ENCODE measurements at regions of chr7 and their contacts with region 1.

Region 1: GRCh38 chr7:25389489-25390106 is 161.3 kb upstream of the NPVF start:
- DNase-seq: peak; percentile 32
- H3K4me3 ChIP-seq: no peak overlapping the region
- H3K27ac ChIP-seq: no peak overlapping the region
- H3K4me1 ChIP-seq: no peaks in the 10 kb centered on the region
- H3K27me3 ChIP-seq: no peaks in the 10 kb centered on the region
- CTCF ChIP-seq: peak; percentile 33 to 52

Region 2: GRCh38 chr7:25250386-25250785 is 139.2 kb before region 1 on chr7:
- CTCF ChIA-PET with region 1: no interaction called
- dilution Hi-C with region 1: loop called (anchors 5 kb)
- in situ Hi-C with region 1: loop called (anchors 5 kb)
- intact Hi-C with region 1: no loop called
- DNase-seq: no peak
- H3K4me3 ChIP-seq: no peak overlapping the region
- H3K27ac ChIP-seq: no peak overlapping the region
- H3K4me1 ChIP-seq: no peaks in the 10 kb centered on the region
- H3K27me3 ChIP-seq: peaks cover 2% of the 10 kb centered on the region
- CTCF ChIP-seq: no peak

Region 3: DNA sequence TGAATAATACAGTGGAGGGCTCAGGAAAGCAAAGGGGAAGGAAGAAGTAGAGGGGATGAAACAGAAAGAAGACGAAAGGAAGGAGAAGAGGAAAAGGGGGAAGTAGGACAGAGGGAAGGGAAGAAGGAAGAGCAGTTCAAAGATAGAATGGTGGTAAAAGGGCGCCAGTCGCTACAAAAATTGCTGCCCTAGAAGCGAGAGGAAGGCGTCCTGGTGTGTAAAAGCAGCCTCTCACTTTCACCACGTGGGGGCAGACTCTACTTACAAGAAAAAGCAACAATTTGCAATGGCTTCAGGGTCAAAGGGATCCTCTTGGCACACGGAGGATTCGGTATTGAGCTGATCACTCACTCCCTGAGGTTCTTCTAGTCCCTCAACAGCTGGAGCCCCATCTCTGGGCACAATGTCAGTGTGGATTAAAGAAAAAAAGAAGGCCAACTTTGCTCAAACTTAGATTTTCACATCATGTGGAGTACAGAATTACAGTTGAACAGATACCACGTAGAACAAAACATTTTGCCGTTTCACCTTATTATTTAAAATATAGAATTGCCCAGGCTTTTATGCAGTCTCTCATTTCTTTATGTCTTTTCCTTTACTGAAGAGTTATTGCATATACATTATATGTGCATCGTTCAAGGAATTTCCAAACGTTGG is 129.9 kb before region 1 on chr7:
- CTCF ChIA-PET with region 1: interaction called, 5 read pairs
- dilution Hi-C with region 1: loop called (anchors 5 kb)
- in situ Hi-C with region 1: loop called (anchors 5 kb)
- intact Hi-C with region 1: loop called (anchors 1 kb)
- DNase-seq: peak; percentile 52
- H3K4me3 ChIP-seq: no peak overlapping the region
- H3K27ac ChIP-seq: no peak overlapping the region
- H3K4me1 ChIP-seq: peaks cover 13% of the 10 kb centered on the region
- H3K27me3 ChIP-seq: peaks cover 5% of the 10 kb centered on the region
- CTCF ChIP-seq: peak; percentile 87 to 92

Region 4: GRCh38 chr7:25347360-25348066 is 42.1 kb before region 1 on chr7:
- CTCF ChIA-PET with region 1: no interaction called
- dilution Hi-C with region 1: loop called (anchors 5 kb)
- in situ Hi-C with region 1: no loop called
- intact Hi-C with region 1: no loop called
- DNase-seq: no peak
- H3K4me3 ChIP-seq: no peak overlapping the region
- H3K27ac ChIP-seq: no peak overlapping the region
- H3K4me1 ChIP-seq: no peaks in the 10 kb centered on the region
- H3K27me3 ChIP-seq: no peaks in the 10 kb centered on the region
- CTCF ChIP-seq: no peak

Region 5: DNA sequence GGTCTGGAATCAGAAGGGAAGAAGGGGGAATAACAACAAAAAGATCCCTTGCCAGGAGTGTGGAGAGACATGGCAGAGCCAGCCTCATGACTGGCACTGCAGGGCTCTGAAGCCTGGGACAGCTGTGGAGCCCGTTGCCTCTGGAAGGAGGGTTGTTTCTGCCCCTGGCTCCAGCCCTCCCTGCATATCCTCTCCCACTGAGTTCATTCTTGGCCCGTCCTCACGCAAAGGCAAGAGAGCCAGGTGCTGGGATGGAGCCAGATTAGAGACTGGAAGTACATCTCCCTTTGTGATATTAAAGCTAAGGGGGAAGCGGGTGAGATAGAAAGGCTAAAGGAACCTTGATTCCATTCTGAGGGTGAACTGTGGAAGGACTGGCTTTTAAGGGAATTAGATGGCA is 19.8 kb before region 1 on chr7:
- CTCF ChIA-PET with region 1: no interaction called
- dilution Hi-C with region 1: no loop called
- in situ Hi-C with region 1: no loop called
- intact Hi-C with region 1: no loop called
- DNase-seq: no peak
- H3K4me3 ChIP-seq: no peak overlapping the region
- H3K27ac ChIP-seq: no peak overlapping the region
- H3K4me1 ChIP-seq: no peaks in the 10 kb centered on the region
- H3K27me3 ChIP-seq: no peaks in the 10 kb centered on the region
- CTCF ChIP-seq: no peak

Region 6: GRCh38 chr7:25565949-25566348 is 176.4 kb after region 1 on chr7:
- CTCF ChIA-PET with region 1: interaction called, 5 read pairs
- dilution Hi-C with region 1: no loop called
- in situ Hi-C with region 1: no loop called
- intact Hi-C with region 1: loop called (anchors 1 kb)
- DNase-seq: peak; percentile 38
- H3K4me3 ChIP-seq: no peak overlapping the region
- H3K27ac ChIP-seq: no peak overlapping the region
- H3K4me1 ChIP-seq: no peaks in the 10 kb centered on the region
- H3K27me3 ChIP-seq: peaks cover 3% of the 10 kb centered on the region
- CTCF ChIP-seq: peak; percentile 100

Region 7: DNA sequence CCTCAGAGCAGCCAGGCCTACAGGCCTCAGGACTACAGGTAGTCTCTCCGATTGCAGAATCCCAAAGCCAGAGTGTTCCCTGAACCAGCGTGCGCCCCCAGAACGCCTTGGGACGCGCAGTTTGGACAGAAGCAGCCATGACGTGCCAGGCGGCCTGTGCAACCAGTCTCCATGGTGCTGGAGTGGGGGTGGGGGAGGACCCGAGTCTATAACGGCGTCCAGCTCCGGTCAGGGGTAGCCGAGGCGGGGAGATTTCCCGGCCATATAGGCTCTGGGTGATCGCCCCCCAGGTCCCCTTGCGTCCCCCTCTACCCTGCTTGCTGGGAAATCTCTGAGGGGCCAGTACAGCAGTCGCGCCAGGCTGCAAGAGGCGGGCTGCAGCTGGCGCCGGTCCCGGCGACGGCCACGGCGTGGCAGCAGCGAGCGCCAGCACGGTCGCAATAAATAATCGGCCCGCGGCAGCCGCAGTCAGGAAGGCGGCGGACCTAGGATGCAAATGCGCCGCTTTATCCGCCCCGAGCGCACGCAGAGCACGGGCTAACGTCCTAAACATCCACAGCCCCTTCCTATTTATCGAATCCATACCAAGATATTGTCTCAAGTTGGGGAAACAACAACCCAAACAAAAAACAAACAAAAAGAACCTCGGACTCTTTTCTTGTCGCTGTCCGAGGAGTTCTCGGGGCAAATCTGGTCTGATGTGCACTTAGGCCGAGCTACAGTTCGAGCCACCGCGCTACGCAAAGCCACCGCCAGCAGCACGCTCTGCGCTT is 1761.2 kb after region 1 on chr7:
- CTCF ChIA-PET with region 1: no interaction called
- dilution Hi-C with region 1: no loop called
- in situ Hi-C with region 1: no loop called
- intact Hi-C with region 1: loop called (anchors 10 kb)
- DNase-seq: peak; percentile 85
- H3K4me3 ChIP-seq: peak overlapping the region; percentile 53 to 60 (median 58)
- H3K27ac ChIP-seq: peak overlapping the region; percentile 46
- H3K4me1 ChIP-seq: peaks cover 70% of the 10 kb centered on the region
- H3K27me3 ChIP-seq: no peaks in the 10 kb centered on the region
- CTCF ChIP-seq: peak; percentile 73 to 88